ENCODE measurements at regions of chr17 and their contacts with region 1.

Region 1: DNA sequence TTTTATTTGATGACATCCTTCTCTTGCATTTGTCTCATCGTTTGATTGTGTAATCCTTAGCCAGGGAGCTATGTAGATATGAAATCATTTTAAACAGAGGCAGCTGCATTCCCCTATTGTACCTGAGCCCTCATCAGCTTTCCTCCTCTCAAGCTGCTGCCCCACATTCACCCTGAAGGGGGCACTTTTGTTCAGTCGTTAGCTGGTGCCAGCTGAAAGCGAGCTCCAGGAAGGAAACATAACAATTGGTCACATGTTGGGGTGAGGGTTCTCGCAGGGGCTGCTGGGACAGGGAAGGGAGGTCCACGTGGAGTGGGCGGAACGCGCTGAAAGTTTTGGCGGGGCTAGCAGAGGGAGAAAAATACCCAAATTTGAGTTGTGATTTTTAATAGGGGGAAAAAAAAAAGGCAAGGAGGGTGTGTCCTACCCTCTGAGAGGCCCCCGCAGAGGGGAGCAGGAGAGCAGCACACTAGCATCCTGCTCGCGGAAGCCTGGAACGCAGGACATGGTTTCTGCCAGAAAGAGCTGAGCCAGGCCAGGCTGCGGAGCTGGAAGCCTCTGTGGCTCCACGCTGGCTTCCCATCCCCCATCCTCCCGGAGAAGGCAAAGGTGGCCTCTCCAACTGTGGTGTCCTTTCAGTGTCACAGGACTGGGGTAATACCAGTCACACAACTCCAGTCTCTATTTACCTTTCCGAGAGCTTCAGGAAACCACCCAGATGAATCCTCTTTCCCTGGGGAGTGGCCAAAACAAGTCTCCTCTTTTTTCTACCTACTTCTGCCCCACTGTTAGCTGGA is 8.5 kb upstream of the MSL1 start:
- DNase-seq: peak; percentile 96 to 97
- H3K4me3 ChIP-seq: peak overlapping the region; percentile 42
- H3K4me3 Mint-ChIP-seq: peak overlapping the region; percentile 83
- H3K27ac Mint-ChIP-seq: peak overlapping the region; percentile 94
- H3K4me1 ChIP-seq: peaks cover 70% of the 10 kb centered on the region
- H3K4me1 Mint-ChIP-seq: peaks cover 69% of the 10 kb centered on the region
- H3K27me3 ChIP-seq: no peaks in the 10 kb centered on the region
- H3K27me3 Mint-ChIP-seq: no peaks in the 10 kb centered on the region
- CTCF ChIP-seq: peak; percentile 80 to 90

Region 2: DNA sequence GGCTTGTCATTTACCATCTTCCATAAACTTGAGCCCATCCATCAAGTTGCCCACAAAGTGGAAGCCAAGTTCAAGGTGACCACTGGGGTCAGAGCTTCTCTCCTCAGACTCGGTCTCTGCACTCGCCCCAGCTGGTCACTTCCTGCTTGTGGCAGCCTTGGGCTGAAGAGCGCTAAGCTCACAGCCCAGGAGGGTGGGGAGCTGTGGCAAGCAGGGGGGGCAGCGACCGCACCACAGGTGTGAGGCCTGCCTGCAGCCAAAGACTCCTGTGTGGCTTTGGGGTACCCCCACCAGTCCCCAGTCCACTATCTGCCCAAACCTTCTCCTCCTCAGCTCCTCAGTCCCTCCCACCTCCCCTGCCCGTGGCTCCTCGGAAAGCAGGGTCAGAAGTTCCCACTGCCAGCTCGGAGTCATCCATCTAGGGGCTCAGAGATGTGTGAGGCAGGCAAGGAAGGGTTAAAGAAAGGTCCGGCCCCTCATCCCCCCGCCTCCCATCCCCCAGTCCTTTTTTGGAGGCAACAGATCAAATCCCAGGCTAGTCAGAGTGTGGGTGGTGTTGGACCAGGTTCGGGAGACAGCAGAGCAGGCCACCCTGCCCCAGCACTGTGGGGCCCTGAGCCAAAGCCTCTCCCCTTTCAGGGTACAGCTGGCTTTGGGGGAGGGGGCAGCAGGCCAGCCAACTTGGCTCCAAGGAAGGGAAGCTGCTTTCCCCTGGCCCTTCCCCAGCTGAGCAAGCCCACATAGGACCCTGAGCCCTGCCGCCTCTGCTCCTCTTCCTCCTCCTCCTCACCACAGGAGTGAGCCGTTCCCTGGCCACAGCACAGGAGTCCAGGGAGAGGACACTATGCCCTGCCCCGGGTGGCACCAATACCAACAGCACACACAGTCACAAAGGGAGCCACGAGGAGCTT is 94.8 kb before region 1 on chr17:
- CTCF ChIA-PET with region 1: interaction called, 15 read pairs
- POLR2A ChIA-PET with region 1: no interaction called
- intact Hi-C with region 1: loop called (anchors 1 kb)
- DNase-seq: no peak
- H3K4me3 ChIP-seq: no peak overlapping the region
- H3K4me3 Mint-ChIP-seq: no peak overlapping the region
- H3K27ac Mint-ChIP-seq: no peak overlapping the region
- H3K4me1 ChIP-seq: peaks cover 18% of the 10 kb centered on the region
- H3K4me1 Mint-ChIP-seq: no peaks in the 10 kb centered on the region
- H3K27me3 ChIP-seq: no peaks in the 10 kb centered on the region
- H3K27me3 Mint-ChIP-seq: no peaks in the 10 kb centered on the region
- CTCF ChIP-seq: no peak

Region 3: GRCh38 chr17:40075201-40075941 is 37.9 kb before region 1 on chr17:
- CTCF ChIA-PET with region 1: interaction called, 16 read pairs
- POLR2A ChIA-PET with region 1: interaction called, 6 read pairs
- intact Hi-C with region 1: loop called (anchors 1 kb)
- DNase-seq: peak; percentile 78 to 81
- H3K4me3 ChIP-seq: no peak overlapping the region
- H3K4me3 Mint-ChIP-seq: no peak overlapping the region
- H3K27ac Mint-ChIP-seq: peak overlapping the region; percentile 47
- H3K4me1 ChIP-seq: peaks cover 49% of the 10 kb centered on the region
- H3K4me1 Mint-ChIP-seq: peaks cover 27% of the 10 kb centered on the region
- H3K27me3 ChIP-seq: no peaks in the 10 kb centered on the region
- H3K27me3 Mint-ChIP-seq: no peaks in the 10 kb centered on the region
- CTCF ChIP-seq: peak; percentile 92 to 94

Region 4: DNA sequence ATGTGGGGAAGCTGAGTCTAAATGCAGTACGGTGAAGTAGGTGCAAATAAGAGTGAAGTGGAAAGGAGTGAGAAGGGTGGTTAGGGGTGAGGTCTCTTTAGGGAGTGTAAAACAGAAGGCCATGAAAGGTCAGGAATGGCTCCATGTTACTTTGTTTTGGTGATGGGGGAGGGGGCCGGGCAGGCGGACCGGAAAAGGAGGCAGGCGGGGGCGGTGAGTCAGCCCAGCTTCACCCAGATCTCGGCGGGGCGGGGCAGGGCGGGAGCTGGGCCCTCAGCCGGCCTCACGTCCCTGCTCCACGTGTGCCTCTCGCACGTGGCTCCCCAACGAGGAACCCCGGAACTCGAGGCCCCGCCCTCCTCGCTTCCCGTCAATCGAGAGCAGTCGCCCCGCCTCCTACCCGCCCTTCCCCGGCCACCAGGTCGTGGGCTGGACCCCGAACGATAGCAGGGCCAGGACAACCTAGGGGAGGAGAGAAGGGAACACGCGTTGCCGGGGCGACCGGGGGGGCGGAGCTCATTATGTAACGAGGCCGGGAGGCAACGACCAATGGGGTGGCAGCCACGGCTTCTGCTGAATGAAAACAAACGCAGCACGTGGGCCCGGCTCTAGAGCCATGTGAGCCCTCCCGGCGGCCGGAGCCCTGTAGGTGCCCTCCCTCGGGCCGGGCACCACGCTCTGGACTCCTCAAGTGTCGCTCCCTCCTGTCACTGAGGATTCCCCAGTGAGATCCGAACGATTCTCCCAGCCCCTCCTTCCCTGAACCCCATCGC is 14.3 kb before region 1 on chr17:
- CTCF ChIA-PET with region 1: interaction called, 136 read pairs
- POLR2A ChIA-PET with region 1: interaction called, 166 read pairs
- intact Hi-C with region 1: loop called (anchors 1 kb)
- DNase-seq: peak; percentile 100
- H3K4me3 ChIP-seq: peak overlapping the region; percentile 59
- H3K4me3 Mint-ChIP-seq: peak overlapping the region; percentile 94
- H3K27ac Mint-ChIP-seq: peak overlapping the region; percentile 92
- H3K4me1 ChIP-seq: peaks cover 37% of the 10 kb centered on the region
- H3K4me1 Mint-ChIP-seq: peaks cover 26% of the 10 kb centered on the region
- H3K27me3 ChIP-seq: no peaks in the 10 kb centered on the region
- H3K27me3 Mint-ChIP-seq: no peaks in the 10 kb centered on the region
- CTCF ChIP-seq: no peak

Region 5: GRCh38 chr17:40168262-40168832 is 55.0 kb after region 1 on chr17:
- CTCF ChIA-PET with region 1: interaction called, 67 read pairs
- POLR2A ChIA-PET with region 1: interaction called, 13 read pairs
- intact Hi-C with region 1: loop called (anchors 1 kb)
- DNase-seq: peak; percentile 68 to 71
- H3K4me3 ChIP-seq: no peak overlapping the region
- H3K4me3 Mint-ChIP-seq: peak overlapping the region; percentile 22
- H3K27ac Mint-ChIP-seq: peak overlapping the region; percentile 87
- H3K4me1 ChIP-seq: peaks cover 7% of the 10 kb centered on the region
- H3K4me1 Mint-ChIP-seq: peaks cover 23% of the 10 kb centered on the region
- H3K27me3 ChIP-seq: no peaks in the 10 kb centered on the region
- H3K27me3 Mint-ChIP-seq: no peaks in the 10 kb centered on the region
- CTCF ChIP-seq: peak; percentile 69 to 89

Region 6: GRCh38 chr17:40219073-40219860 is 106.0 kb after region 1 on chr17 and contains the start of gene WIPF2:
- CTCF ChIA-PET with region 1: interaction called, 14 read pairs
- POLR2A ChIA-PET with region 1: interaction called, 4 read pairs
- intact Hi-C with region 1: no loop called
- DNase-seq: peak; percentile 98 to 99
- H3K4me3 ChIP-seq: peak within 1 kb of the TSS; percentile 67
- H3K4me3 Mint-ChIP-seq: peak within 1 kb of the TSS; percentile 91
- H3K27ac Mint-ChIP-seq: peak within 1 kb of the TSS; percentile 94
- H3K4me1 ChIP-seq: no peaks in the 10 kb centered on the region; the same call in 1 of the 2 replicates
- H3K4me1 Mint-ChIP-seq: peaks cover 13% of the 10 kb centered on the region
- H3K27me3 ChIP-seq: no peaks in the 10 kb centered on the region
- H3K27me3 Mint-ChIP-seq: no peaks in the 10 kb centered on the region
- CTCF ChIP-seq: peak; percentile 83
- total RNA-seq, gene WIPF2: 33.4 and 38.3 TPM in 2 replicates

Measured in Caco-2 (cell line).